ENCODE measurements at regions of chr2 and their contacts with region 1.

Region 1: GRCh38 chr2:85642725-85643124 is 25.3 kb downstream of the SFTPB start:
- DNase-seq: no peak
- ATAC-seq: no peak
- H3K4me3 ChIP-seq: no peak overlapping the region
- H3K27ac ChIP-seq: no peak overlapping the region
- H3K4me1 ChIP-seq: peaks cover 1% of the 10 kb centered on the region; the same call in 1 of the 3 replicates
- CTCF ChIP-seq: no peak
- EP300 ChIP-seq: no peak
- POLR2A ChIP-seq: no peak
- RAD21 ChIP-seq: no peak

Region 2: GRCh38 chr2:85156153-85156552 is 486.6 kb before region 1 on chr2:
- CTCF ChIA-PET with region 1: no interaction called
- POLR2A ChIA-PET with region 1: no interaction called
- DNase-seq: no peak
- ATAC-seq: no peak
- H3K4me3 ChIP-seq: no peak overlapping the region
- H3K27ac ChIP-seq: no peak overlapping the region
- H3K4me1 ChIP-seq: no peaks in the 10 kb centered on the region
- CTCF ChIP-seq: no peak
- EP300 ChIP-seq: no peak
- POLR2A ChIP-seq: no peak
- RAD21 ChIP-seq: no peak

Region 3: GRCh38 chr2:85653996-85654395 is 11.3 kb after region 1 on chr2:
- CTCF ChIA-PET with region 1: interaction called, 126 read pairs
- POLR2A ChIA-PET with region 1: interaction called, 6 read pairs
- DNase-seq: no peak
- ATAC-seq: no peak
- H3K4me3 ChIP-seq: no peak overlapping the region
- H3K27ac ChIP-seq: peak overlapping the region in 1 of 2 experiments; percentile 91; a peak in 2 of 6 replicates
- H3K4me1 ChIP-seq: peaks cover 79% of the 10 kb centered on the region
- CTCF ChIP-seq: no peak
- EP300 ChIP-seq: no peak
- POLR2A ChIP-seq: no peak
- RAD21 ChIP-seq: no peak

Region 4: DNA sequence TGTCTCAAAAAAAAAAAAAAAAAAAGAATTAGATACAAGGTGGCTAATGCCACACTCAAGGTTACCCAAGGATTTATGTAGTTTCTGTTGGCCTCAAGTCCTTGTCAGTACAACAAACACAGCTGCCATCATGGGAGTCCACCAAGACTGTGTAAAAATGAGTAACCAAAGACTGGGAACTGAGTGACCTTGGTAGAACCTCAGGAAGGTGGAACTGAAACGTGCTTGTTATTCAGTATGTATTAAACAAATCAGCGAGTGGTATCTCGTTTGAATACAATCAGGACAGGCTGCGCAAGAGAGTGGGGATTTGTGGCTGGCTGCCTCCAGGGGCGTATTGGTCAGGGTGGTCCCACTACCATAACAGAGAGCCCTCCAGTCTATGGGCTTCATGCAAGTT is 26.8 kb after region 1 on chr2:
- CTCF ChIA-PET with region 1: interaction called, 73 read pairs
- POLR2A ChIA-PET with region 1: no interaction called
- DNase-seq: no peak
- ATAC-seq: no peak
- H3K4me3 ChIP-seq: no peak overlapping the region
- H3K27ac ChIP-seq: no peak overlapping the region
- H3K4me1 ChIP-seq: no peaks in the 10 kb centered on the region; the same call in 2 of the 3 replicates
- CTCF ChIP-seq: no peak
- EP300 ChIP-seq: no peak
- POLR2A ChIP-seq: no peak
- RAD21 ChIP-seq: no peak

Region 5: GRCh38 chr2:85694052-85695025 is 51.6 kb after region 1 on chr2 and contains the start of gene GNLY:
- CTCF ChIA-PET with region 1: interaction called, 18 read pairs
- POLR2A ChIA-PET with region 1: no interaction called
- DNase-seq: no peak
- ATAC-seq: no peak; a peak in 1 of 6 replicates
- H3K4me3 ChIP-seq: no peak within 1 kb of the TSS
- H3K27ac ChIP-seq: peak within 1 kb of the TSS in 1 of 2 experiments; percentile 47; a peak in 3 of 6 replicates
- H3K4me1 ChIP-seq: peaks cover 7% of the 10 kb centered on the region; the same call in 1 of the 3 replicates
- CTCF ChIP-seq: no peak
- EP300 ChIP-seq: no peak
- POLR2A ChIP-seq: no peak
- RAD21 ChIP-seq: no peak
- polyA plus RNA-seq, gene GNLY: not detected in 2 replicates

Measured in A549 (cell line).